WTC11 (cell line): ENCODE measurements at regions of chr1 and their contacts with region 1.

Region 1: DNA sequence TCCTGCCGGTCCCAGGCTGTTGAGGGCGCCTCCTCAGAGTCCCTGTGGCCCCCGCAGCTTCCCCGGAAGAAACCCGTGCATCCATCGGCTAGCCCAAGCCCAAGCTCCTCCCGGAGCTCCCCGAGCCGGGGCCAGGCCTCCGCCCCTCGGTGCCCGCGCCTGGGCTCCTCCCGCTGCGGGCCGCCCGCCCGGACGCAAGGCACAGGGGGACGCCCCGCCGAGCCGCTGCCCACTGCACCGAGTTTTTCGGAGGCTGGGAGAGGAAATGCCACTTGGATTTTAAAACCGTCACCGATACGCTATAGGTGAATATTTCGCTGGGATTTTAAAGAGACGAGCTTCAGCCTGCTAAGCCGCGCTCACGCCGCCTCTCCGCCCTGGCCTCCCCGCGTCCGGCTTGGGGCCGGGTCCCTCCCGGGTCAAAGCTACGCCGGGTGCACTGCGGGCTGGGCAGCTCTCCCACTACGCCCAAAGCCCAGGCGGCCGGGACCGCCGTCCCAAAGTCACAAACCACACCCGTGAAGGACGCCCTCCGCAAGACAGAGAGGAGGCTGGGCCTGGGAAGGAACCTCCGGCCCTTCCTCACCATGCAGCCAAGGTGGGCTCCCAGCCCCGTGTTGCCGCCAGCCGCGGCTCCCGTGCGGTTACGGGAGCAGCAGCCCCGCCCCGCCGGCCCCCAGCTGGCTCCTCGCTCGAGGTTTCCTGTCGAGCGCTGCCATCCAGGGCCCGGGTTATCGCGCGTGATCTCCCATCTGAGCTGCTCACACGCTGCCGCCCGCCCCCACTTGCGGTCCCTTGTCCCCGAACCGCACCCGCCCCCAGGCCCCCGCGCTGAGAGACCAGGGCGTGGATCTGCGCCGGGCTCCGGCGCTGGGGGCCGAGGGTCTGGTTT is 63.2 kb downstream of the CD247 start:
- DNase-seq: peak; percentile 57
- ATAC-seq: peak; percentile 54
- H3K4me3 Mint-ChIP-seq: peak overlapping the region; percentile 64
- H3K27ac Mint-ChIP-seq: no peak overlapping the region
- H3K4me1 Mint-ChIP-seq: peaks cover 24% of the 10 kb centered on the region
- H3K27me3 Mint-ChIP-seq: peaks cover 46% of the 10 kb centered on the region
- CTCF ChIP-seq: no peak

Region 2: DNA sequence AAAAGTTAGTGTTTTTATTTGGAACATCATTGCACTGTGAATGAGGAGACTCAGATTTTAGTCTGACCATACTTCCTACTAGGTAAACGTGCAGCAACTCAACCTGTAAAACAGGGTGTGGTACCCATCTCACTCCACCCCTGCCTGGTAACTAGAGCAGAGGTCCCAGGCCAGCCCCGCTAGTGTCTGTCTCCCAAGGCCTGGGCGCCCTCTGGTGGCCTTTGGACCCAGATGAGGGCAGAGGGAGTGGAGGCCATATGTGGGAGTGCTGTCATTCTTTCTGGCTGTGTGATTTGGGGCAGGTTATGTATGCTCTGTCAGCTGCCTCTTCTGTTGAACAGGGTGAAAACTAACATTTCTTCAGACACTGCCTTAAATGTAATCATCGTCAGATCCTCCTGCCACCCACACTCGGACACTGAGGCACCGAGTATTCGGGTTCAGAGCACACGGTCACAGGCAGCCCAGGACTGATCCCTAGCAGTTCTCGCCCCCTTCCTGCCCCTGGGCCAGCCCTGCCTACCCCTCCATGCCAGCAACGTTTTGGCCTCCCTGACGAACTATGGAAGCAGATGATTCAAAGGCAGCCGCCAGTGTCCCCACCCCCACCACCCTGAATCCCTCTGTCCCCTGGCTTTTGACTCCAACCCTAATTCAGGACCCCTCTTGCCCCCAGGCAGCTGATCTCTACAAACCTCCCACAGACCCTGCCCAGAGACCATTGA is 12.9 kb before region 1 on chr1:
- CTCF ChIA-PET with region 1: interaction called, 15 read pairs
- POLR2A ChIA-PET with region 1: no interaction called
- DNase-seq: peak; percentile 93
- ATAC-seq: peak; percentile 88
- H3K4me3 Mint-ChIP-seq: no peak overlapping the region
- H3K27ac Mint-ChIP-seq: no peak overlapping the region
- H3K4me1 Mint-ChIP-seq: peaks cover 18% of the 10 kb centered on the region
- H3K27me3 Mint-ChIP-seq: peaks cover 44% of the 10 kb centered on the region
- CTCF ChIP-seq: peak; percentile 76